ENCODE measurements at regions of chr17 and their contacts with region 1.

Region 1: GRCh38 chr17:42843358-42843934 is 934 bp upstream of the AOC2 start:
- DNase-seq: peak; percentile 33
- H3K4me3 ChIP-seq: no peak overlapping the region
- H3K27ac ChIP-seq: no peak overlapping the region
- H3K4me1 ChIP-seq: no peaks in the 10 kb centered on the region
- H3K27me3 ChIP-seq: no peaks in the 10 kb centered on the region
- CTCF ChIP-seq: peak; percentile 62 to 96 (median 86)
- POLR2A ChIP-seq: no peak

Region 2: DNA sequence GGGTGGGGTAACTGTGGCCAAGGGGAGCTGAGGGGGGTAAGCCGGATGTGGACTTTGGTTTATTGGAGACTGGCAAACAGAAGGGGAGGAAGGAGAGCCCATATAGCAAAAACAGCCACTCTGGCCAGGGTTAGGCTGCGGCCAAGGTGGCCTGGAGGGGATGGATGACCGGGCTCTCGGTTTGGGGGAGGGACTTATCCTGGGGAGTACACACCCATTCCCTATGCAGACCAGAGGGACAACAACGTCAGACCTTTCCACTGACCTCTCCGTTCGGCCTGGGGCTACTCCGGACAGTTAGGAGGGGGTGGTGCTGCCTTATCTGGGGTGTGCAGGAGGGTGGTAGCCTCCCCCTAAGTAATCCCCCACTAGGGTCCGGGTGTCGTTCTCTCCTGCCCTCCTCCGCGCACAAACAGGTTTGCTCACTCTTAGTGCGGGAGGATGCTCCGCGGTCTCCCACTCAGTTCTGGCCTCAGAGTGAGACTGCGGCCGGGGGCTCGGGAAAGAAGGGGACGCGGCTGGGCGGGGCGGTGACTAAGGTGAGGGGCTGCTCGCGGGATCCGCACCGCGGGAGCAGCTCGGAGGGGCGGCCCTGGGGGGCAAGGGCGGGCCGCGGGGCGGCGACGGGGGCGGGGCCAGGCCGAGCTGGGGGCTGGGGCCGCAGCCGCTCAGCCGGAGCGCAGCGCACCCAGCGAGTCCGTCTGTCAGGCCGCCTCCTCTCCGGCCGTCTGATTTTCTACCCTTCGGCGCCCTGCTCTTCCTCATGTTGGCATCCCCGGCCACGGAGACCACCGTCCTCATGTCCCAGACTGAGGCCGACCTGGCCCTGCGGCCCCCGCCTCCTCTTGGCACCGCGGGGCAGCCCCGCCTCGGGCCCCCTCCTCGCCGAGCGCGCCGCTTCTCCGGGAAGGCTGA is 63.3 kb before region 1 on chr17 and contains the start of gene WNK4:
- intact Hi-C with region 1: no loop called
- DNase-seq: peak; percentile 46
- H3K4me3 ChIP-seq: peak within 1 kb of the TSS; percentile 48 to 52
- H3K27ac ChIP-seq: peak within 1 kb of the TSS; percentile 75 to 77
- H3K4me1 ChIP-seq: no peaks in the 10 kb centered on the region
- H3K27me3 ChIP-seq: no peaks in the 10 kb centered on the region
- CTCF ChIP-seq: no peak
- POLR2A ChIP-seq: no peak
- total RNA-seq, gene WNK4: 24.7 to 28.9 TPM

Region 3: GRCh38 chr17:42937712-42938596 is 94.5 kb after region 1 on chr17:
- intact Hi-C with region 1: loop called (anchors 2 kb)
- DNase-seq: no peak
- H3K4me3 ChIP-seq: no peak overlapping the region
- H3K27ac ChIP-seq: no peak overlapping the region
- H3K4me1 ChIP-seq: no peaks in the 10 kb centered on the region
- H3K27me3 ChIP-seq: no peaks in the 10 kb centered on the region
- CTCF ChIP-seq: peak in 3 of 4 experiments; percentile 54 to 71 (median 68)
- POLR2A ChIP-seq: no peak